WTC11 (cell line): ENCODE measurements at regions of chr10 and their contacts with region 1.

Region 1: GRCh38 chr10:60576130-60577069 is 186.7 kb upstream of the ANK3 start:
- DNase-seq: no peak
- ATAC-seq: peak; percentile 19; the same call in 1 of the 2 replicates
- H3K4me3 Mint-ChIP-seq: no peak overlapping the region
- H3K27ac Mint-ChIP-seq: peak overlapping the region; percentile 84
- H3K4me1 Mint-ChIP-seq: peaks cover 49% of the 10 kb centered on the region
- H3K27me3 Mint-ChIP-seq: no peaks in the 10 kb centered on the region
- CTCF ChIP-seq: no peak

Region 2: GRCh38 chr10:60594476-60595051 is 18.2 kb after region 1 on chr10:
- CTCF ChIA-PET with region 1: no interaction called
- POLR2A ChIA-PET with region 1: no interaction called
- DNase-seq: no peak
- ATAC-seq: peak; percentile 98
- H3K4me3 Mint-ChIP-seq: no peak overlapping the region
- H3K27ac Mint-ChIP-seq: peak overlapping the region; percentile 41
- H3K4me1 Mint-ChIP-seq: peaks cover 9% of the 10 kb centered on the region
- H3K27me3 Mint-ChIP-seq: no peaks in the 10 kb centered on the region
- CTCF ChIP-seq: no peak

Region 3: DNA sequence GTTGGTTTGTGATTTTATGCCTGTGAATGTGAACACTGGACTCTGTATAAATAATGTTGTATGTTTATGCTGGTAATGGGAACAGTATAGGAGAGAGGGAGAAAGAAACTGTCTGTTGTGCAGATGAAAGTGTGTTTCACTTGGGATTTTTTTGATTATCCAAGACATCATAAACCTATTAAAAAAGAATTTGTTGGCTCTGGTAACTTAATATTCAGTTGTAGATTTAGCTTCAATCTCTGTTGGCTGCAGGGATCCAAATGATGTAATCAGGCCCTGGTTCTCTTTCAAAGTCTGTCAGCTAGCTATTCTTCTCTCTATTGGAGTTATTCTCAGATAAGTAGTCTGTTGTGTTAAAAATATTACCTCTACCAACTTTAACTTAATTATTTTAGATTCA is 536.4 kb after region 1 on chr10:
- CTCF ChIA-PET with region 1: no interaction called
- POLR2A ChIA-PET with region 1: interaction called, 10 read pairs
- DNase-seq: no peak
- ATAC-seq: no peak
- H3K4me3 Mint-ChIP-seq: no peak overlapping the region
- H3K27ac Mint-ChIP-seq: no peak overlapping the region
- H3K4me1 Mint-ChIP-seq: no peaks in the 10 kb centered on the region
- H3K27me3 Mint-ChIP-seq: no peaks in the 10 kb centered on the region
- CTCF ChIP-seq: no peak